Caco-2 (cell line): ENCODE measurements at regions of chr4 and their contacts with region 1.

Region 1: DNA sequence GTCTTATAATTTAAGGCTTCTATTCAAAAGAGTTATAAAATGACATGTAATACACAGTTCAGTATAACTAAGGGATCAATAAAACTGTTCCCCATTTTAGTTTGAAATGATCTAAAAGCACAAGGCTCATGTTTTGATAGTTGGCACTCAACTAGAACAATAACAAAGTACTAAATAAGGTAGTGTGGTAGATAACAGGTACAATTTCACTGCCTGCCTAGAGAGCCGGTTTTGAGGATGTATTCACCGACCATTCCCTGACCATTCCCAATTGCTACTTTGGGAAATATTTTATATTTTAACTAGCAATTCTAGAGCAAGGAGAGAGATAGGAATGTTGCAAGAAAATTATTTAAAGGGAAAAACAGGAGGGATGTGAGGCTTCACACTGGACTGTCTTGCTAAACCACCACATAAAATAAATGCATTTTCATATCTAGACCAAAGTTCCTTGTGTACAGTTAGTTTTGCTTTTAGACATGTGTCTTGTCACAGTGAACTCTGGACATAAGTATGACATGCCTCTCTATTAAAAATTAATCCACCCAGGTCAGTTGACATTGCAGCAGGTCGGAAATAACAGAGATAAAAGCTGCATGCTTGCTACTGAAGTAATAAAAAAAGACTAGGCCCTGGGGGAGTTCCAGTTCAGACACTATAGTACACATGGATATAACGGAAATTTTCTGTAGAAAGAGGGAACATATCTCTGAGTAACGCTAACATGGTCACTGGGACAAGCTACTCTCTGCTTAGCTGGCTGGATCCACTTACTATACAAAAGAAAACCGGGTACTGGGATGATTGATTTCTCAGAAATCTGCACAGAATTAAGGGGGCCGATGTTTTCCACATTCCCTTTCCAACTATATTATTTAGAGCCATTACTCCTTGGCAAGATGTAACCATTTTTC is 56.3 kb upstream of the NAP1L5 start:
- DNase-seq: peak in 1 of 2 experiments; percentile 32
- H3K4me3 ChIP-seq: no peak overlapping the region
- H3K4me3 Mint-ChIP-seq: no peak overlapping the region
- H3K27ac Mint-ChIP-seq: no peak overlapping the region
- H3K4me1 ChIP-seq: peaks cover 24% of the 10 kb centered on the region
- H3K4me1 Mint-ChIP-seq: peaks cover 22% of the 10 kb centered on the region
- H3K27me3 ChIP-seq: no peaks in the 10 kb centered on the region
- H3K27me3 Mint-ChIP-seq: no peaks in the 10 kb centered on the region
- CTCF ChIP-seq: no peak

Region 2: DNA sequence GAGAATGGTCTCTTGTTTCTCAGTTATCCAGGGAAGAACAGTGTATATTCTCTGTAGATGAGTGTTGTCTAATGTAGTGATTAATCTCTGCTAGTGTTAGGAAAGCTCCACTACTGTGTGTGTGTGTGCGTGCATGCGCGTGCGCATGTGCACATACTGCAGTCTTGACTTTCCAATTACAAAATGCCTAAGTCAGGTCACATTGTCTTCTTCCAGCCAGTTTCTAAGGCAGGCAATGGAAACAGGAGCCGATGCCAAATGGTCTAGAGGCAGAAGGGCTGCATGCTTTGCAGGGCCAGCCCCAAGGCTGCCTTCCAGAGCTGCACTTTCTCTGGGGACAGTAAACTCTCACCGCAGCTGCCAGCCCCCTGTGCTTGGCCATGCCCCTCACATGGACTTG is 25.8 kb before region 1 on chr4:
- CTCF ChIA-PET with region 1: no interaction called
- POLR2A ChIA-PET with region 1: no interaction called
- intact Hi-C with region 1: no loop called
- DNase-seq: no peak
- H3K4me3 ChIP-seq: no peak overlapping the region
- H3K4me3 Mint-ChIP-seq: no peak overlapping the region
- H3K27ac Mint-ChIP-seq: no peak overlapping the region
- H3K4me1 ChIP-seq: no peaks in the 10 kb centered on the region
- H3K4me1 Mint-ChIP-seq: no peaks in the 10 kb centered on the region
- H3K27me3 ChIP-seq: no peaks in the 10 kb centered on the region
- H3K27me3 Mint-ChIP-seq: no peaks in the 10 kb centered on the region
- CTCF ChIP-seq: no peak

Region 3: DNA sequence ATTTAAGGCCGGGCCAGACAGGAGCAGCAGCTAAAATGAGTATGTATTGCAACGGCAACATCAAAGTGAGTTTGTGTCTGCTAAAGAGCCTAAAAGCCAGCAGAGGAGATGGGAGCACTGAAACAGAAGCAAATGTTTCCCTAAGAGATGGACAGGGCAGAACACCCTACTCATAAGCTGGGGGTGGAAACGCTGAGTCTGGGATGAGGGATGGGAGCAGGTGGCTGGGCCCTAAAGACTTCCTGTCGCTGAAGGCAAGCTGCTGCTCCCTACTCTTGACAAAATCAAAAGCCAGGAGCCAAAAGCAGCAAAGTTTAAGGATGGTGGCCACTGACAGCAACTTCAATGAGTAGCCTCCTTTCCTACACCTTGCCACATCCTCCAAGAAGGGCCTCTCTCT is 15.7 kb before region 1 on chr4:
- CTCF ChIA-PET with region 1: no interaction called
- POLR2A ChIA-PET with region 1: no interaction called
- intact Hi-C with region 1: loop called (anchors 2 kb)
- DNase-seq: no peak
- H3K4me3 ChIP-seq: no peak overlapping the region
- H3K4me3 Mint-ChIP-seq: no peak overlapping the region
- H3K27ac Mint-ChIP-seq: peak overlapping the region; percentile 46
- H3K4me1 ChIP-seq: peaks cover 9% of the 10 kb centered on the region
- H3K4me1 Mint-ChIP-seq: peaks cover 10% of the 10 kb centered on the region
- H3K27me3 ChIP-seq: no peaks in the 10 kb centered on the region
- H3K27me3 Mint-ChIP-seq: no peaks in the 10 kb centered on the region
- CTCF ChIP-seq: no peak